AG04450 (cell line): ENCODE measurements at regions of chr3 and their contacts with region 1.

Region 1: GRCh38 chr3:194315088-194315964 is 35.8 kb downstream of the CPN2 start:
- DNase-seq: no peak
- H3K4me3 ChIP-seq: peak overlapping the region; percentile 59
- H3K27ac ChIP-seq: no peak overlapping the region
- H3K27me3 ChIP-seq: peaks cover 48% of the 10 kb centered on the region
- CTCF ChIP-seq: peak; percentile 92

Region 2: GRCh38 chr3:193788189-193788991 is 526.9 kb before region 1 on chr3:
- CTCF ChIA-PET with region 1: interaction called, 280 read pairs
- POLR2A ChIA-PET with region 1: no interaction called
- DNase-seq: no peak
- H3K4me3 ChIP-seq: no peak overlapping the region
- H3K27ac ChIP-seq: no peak overlapping the region
- H3K27me3 ChIP-seq: peaks cover 56% of the 10 kb centered on the region
- CTCF ChIP-seq: peak; percentile 85

Region 3: GRCh38 chr3:194058189-194058571 is 257.1 kb before region 1 on chr3:
- CTCF ChIA-PET with region 1: interaction called, 14 read pairs
- POLR2A ChIA-PET with region 1: no interaction called
- DNase-seq: no peak
- H3K4me3 ChIP-seq: no peak overlapping the region
- H3K27ac ChIP-seq: no peak overlapping the region
- H3K27me3 ChIP-seq: peaks cover 7% of the 10 kb centered on the region
- CTCF ChIP-seq: no peak

Region 4: DNA sequence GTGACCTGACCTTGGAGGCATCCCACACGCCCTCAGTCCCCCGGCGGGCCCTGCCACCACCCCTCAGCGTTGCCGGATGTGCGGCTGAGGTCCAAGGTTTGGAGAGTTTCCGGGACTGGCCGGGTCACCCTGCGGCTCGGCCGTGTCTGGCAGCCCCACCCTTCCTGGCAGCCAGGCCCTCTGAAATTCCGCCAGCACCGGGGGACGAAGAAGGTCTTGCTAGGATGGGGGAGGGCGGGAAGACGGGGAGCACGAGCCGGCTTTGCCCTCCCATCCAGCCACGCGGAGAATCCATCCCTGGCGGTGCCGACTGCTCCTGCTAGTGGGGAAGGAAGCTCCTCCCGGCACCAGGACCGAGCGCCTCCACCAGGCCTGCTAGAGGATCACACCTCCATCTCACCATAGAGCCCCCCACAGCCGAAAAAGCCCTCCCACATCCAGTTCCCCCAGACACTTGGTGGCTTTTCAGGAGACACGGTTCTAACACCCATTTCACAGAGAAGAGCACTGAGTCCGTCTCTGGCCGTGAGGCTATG is 45.6 kb before region 1 on chr3:
- CTCF ChIA-PET with region 1: interaction called, 11 read pairs
- POLR2A ChIA-PET with region 1: no interaction called
- DNase-seq: no peak
- H3K4me3 ChIP-seq: no peak overlapping the region
- H3K27ac ChIP-seq: no peak overlapping the region
- H3K27me3 ChIP-seq: peaks cover 8% of the 10 kb centered on the region
- CTCF ChIP-seq: peak; percentile 46

Region 5: DNA sequence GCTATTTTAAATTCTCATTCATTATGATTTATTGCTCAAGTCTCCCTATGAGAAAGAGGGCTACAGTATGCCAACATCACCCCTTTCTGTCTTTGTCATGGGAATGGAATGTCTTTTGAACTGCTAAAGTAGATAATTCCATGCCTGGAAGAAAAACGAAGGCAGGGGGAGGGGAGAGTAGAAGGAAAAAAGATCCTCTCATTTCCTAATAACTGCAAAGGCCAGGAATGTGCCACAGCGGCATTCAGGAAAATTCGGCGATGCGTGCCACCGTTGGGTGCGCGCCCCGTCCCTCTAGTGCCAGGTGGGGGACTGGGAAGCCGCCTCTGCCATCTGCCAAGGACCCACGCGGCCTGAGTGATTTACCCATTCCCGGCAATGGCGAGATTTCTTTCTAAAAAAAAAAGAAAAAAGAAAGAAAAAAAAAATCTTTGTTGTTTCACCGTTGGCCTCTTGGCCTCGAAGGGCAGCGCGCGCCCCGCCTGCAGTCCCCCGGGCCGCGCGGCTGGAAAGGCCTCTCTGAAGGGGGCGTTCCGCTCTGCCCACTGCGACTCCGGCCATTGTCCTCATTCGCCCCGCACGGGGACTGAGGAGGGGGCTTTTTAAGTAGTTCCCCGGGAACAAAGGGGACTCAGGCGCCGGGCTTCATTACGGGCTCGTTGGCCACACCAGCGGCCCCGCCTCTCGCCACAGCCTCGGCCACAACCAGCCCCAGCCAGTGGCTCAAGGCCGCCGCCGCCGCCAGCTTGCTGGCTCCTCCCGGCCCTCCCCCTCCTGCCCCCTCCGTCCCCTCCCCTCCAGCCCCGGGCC is 18.7 kb before region 1 on chr3:
- CTCF ChIA-PET with region 1: interaction called, 15 read pairs
- POLR2A ChIA-PET with region 1: no interaction called
- DNase-seq: no peak
- H3K4me3 ChIP-seq: peak overlapping the region; percentile 35
- H3K27ac ChIP-seq: no peak overlapping the region
- H3K27me3 ChIP-seq: peaks cover 5% of the 10 kb centered on the region
- CTCF ChIP-seq: no peak

Region 6: DNA sequence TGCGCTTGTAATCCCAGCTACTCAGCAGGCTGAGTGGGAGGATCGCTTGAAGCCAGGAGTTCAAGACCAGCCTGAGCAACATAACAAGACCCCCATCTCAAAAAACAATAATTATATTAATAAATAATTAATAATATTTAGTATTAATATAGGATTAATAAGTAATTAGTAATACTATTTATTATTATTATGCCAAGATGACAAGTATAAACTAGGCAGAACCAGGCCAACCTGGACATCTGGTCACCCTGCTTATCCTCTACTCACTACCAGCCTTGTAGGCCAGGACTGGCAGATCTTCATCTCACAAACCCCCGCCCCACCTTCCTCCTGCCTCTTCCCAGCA is 35.4 kb after region 1 on chr3:
- CTCF ChIA-PET with region 1: no interaction called
- POLR2A ChIA-PET with region 1: no interaction called
- DNase-seq: no peak
- H3K4me3 ChIP-seq: no peak overlapping the region
- H3K27ac ChIP-seq: no peak overlapping the region
- H3K27me3 ChIP-seq: no peaks in the 10 kb centered on the region
- CTCF ChIP-seq: no peak

Region 7: DNA sequence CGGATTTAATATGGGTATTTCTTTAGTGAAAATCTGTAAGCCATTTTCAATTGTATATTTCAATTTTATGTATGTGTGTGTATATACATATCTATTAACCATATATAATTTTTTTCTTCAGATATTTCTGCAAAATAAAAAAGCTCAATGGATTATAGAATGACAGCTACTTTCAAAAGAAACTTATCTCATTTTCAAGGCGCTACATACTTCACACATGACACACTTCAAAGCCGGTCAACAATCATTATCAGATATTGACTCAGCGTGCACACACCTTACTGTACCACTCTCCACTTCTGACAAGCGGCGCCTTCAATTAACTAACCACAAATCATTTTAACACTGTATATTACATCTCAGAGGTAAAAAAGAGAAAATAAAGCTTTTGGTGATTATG is 131.8 kb after region 1 on chr3:
- CTCF ChIA-PET with region 1: no interaction called
- POLR2A ChIA-PET with region 1: no interaction called
- DNase-seq: no peak
- H3K4me3 ChIP-seq: no peak overlapping the region
- H3K27ac ChIP-seq: no peak overlapping the region
- H3K27me3 ChIP-seq: no peaks in the 10 kb centered on the region
- CTCF ChIP-seq: no peak

Region 8: GRCh38 chr3:194879991-194880939 is 564.9 kb after region 1 on chr3:
- CTCF ChIA-PET with region 1: no interaction called
- POLR2A ChIA-PET with region 1: no interaction called
- DNase-seq: no peak
- H3K4me3 ChIP-seq: no peak overlapping the region
- H3K27ac ChIP-seq: no peak overlapping the region
- H3K27me3 ChIP-seq: peaks cover 9% of the 10 kb centered on the region
- CTCF ChIP-seq: no peak